Calu3 (cell line): ENCODE measurements at regions of chr11 and their contacts with region 1.

Region 1: GRCh38 chr11:3747684-3748083 is 49.7 kb downstream of the NUP98 start:
- DNase-seq: no peak
- H3K4me3 Mint-ChIP-seq: no peak overlapping the region
- H3K27ac Mint-ChIP-seq: no peak overlapping the region
- H3K4me1 Mint-ChIP-seq: peaks cover 10% of the 10 kb centered on the region
- H3K27me3 Mint-ChIP-seq: no peaks in the 10 kb centered on the region
- CTCF ChIP-seq: no peak

Region 2: GRCh38 chr11:3057069-3057963 is 690.4 kb before region 1 on chr11 and contains the start of gene CARS1:
- CTCF ChIA-PET with region 1: no interaction called
- intact Hi-C with region 1: no loop called
- DNase-seq: peak; percentile 96
- H3K4me3 Mint-ChIP-seq: peak within 1 kb of the TSS; percentile 96
- H3K27ac Mint-ChIP-seq: peak within 1 kb of the TSS; percentile 81
- H3K4me1 Mint-ChIP-seq: peaks cover 6% of the 10 kb centered on the region
- H3K27me3 Mint-ChIP-seq: peaks cover under 1% of the 10 kb centered on the region
- CTCF ChIP-seq: no peak
- total RNA-seq, gene CARS1: 67.6 and 80.1 TPM in 2 replicates

Region 3: GRCh38 chr11:3781423-3781822 is 33.7 kb after region 1 on chr11:
- CTCF ChIA-PET with region 1: no interaction called
- intact Hi-C with region 1: loop called (anchors 5 kb)
- DNase-seq: no peak
- H3K4me3 Mint-ChIP-seq: no peak overlapping the region
- H3K27ac Mint-ChIP-seq: no peak overlapping the region
- H3K4me1 Mint-ChIP-seq: peaks cover 12% of the 10 kb centered on the region
- H3K27me3 Mint-ChIP-seq: no peaks in the 10 kb centered on the region
- CTCF ChIP-seq: no peak

Region 4: GRCh38 chr11:3797329-3798095 is 49.8 kb after region 1 on chr11 and contains the start of gene NUP98:
- CTCF ChIA-PET with region 1: no interaction called
- intact Hi-C with region 1: no loop called
- DNase-seq: peak; percentile 99
- H3K4me3 Mint-ChIP-seq: peak within 1 kb of the TSS; percentile 83
- H3K27ac Mint-ChIP-seq: peak within 1 kb of the TSS; percentile 79
- H3K4me1 Mint-ChIP-seq: peaks cover 9% of the 10 kb centered on the region
- H3K27me3 Mint-ChIP-seq: no peaks in the 10 kb centered on the region
- CTCF ChIP-seq: no peak
- total RNA-seq, gene NUP98: 114 and 126 TPM in 2 replicates